ENCODE measurements at regions of chr6 and their contacts with region 1.

Region 1: GRCh38 chr6:167833396-167833763 is 6.7 kb downstream of the AFDN start:
- DNase-seq: no peak
- ATAC-seq: peak; percentile 23
- H3K4me3 ChIP-seq: peak overlapping the region; percentile 57
- H3K27ac ChIP-seq: peak overlapping the region; percentile 84
- H3K4me1 ChIP-seq: peaks cover 20% of the 10 kb centered on the region
- H3K27me3 ChIP-seq: no peaks in the 10 kb centered on the region
- CTCF ChIP-seq: no peak
- EP300 ChIP-seq: no peak
- POLR2A ChIP-seq: no peak
- RAD21 ChIP-seq: no peak

Region 2: DNA sequence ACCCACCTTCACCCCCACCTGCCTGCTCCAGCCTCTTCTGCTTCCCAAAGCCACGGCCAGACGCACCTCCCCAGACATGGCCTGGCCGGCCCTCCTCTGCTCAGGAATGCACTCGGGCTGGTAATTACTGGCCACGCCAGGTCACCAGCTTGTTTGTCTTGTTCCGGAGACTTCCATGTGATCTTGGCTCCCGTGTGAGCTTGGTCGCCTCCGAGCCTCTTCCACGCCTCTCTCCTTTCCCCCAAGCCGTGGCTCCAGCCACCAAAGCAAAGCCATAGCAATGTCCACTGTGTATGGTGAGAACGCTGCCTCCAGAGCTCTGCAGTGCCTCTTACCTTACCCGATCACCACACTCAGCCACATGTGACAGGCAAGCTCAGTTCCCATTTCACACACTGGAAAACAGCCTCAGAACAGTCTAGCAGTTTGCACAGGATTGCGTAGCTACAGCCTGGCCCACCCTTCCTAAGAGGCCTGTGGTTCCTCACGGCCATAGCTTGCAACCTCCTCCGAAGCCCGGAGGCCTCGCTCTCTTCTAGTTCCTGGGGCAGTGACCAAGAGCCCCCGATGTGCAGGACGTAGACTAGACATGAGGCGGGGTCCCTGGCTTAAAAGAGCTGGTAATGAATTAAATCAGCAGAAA is 54.8 kb before region 1 on chr6:
- CTCF ChIA-PET with region 1: no interaction called
- POLR2A ChIA-PET with region 1: no interaction called
- RAD21 ChIA-PET with region 1: no interaction called
- SMC1A ChIA-PET with region 1: no interaction called
- in situ Hi-C with region 1: no loop called
- intact Hi-C with region 1: no loop called
- DNase-seq: no peak
- ATAC-seq: no peak
- H3K4me3 ChIP-seq: no peak overlapping the region
- H3K27ac ChIP-seq: no peak overlapping the region
- H3K4me1 ChIP-seq: no peaks in the 10 kb centered on the region
- H3K27me3 ChIP-seq: no peaks in the 10 kb centered on the region; a peak in 1 of 4 replicates
- CTCF ChIP-seq: no peak
- EP300 ChIP-seq: no peak
- POLR2A ChIP-seq: no peak
- RAD21 ChIP-seq: no peak

Region 3: DNA sequence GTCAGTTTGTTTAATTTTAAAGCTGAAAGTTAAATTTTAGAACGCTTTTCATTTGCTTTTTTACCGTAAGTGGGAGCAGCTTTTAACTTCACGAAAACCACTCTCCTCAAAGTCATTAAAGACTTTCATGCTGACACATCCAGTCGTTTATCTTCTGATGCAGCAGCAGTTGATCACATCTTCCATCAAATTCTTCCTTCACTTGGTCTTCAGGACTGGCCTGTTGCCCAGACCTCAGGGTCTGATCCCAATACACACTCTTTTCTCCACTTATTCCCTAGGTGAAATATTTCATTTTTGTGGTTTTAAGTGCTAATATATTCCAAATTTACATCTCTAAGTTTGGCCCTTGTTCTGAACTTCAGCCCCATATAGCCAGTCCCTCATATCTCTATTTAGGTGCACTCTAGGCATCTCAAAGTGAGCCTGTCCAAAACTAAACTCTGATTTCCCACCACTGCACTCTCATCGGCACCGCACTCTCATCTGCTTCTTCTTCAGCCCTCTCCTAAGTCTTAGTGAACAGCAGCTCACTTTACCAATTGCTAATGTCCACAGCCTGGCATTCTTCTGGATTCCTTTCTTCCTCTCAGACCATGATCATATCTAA is 13.7 kb after region 1 on chr6:
- CTCF ChIA-PET with region 1: interaction called, 9 read pairs
- POLR2A ChIA-PET with region 1: interaction called, 4 read pairs
- RAD21 ChIA-PET with region 1: interaction called, 10 read pairs
- SMC1A ChIA-PET with region 1: interaction called, 28 read pairs
- in situ Hi-C with region 1: no loop called
- intact Hi-C with region 1: no loop called
- DNase-seq: no peak
- ATAC-seq: no peak
- H3K4me3 ChIP-seq: no peak overlapping the region
- H3K27ac ChIP-seq: no peak overlapping the region
- H3K4me1 ChIP-seq: peaks cover 7% of the 10 kb centered on the region; the same call in 1 of the 2 replicates
- H3K27me3 ChIP-seq: no peaks in the 10 kb centered on the region
- CTCF ChIP-seq: no peak
- EP300 ChIP-seq: no peak
- POLR2A ChIP-seq: no peak
- RAD21 ChIP-seq: no peak

Region 4: GRCh38 chr6:167898673-167899311 is 65.4 kb after region 1 on chr6:
- CTCF ChIA-PET with region 1: interaction called, 10 read pairs
- POLR2A ChIA-PET with region 1: no interaction called
- RAD21 ChIA-PET with region 1: interaction called, 4 read pairs
- SMC1A ChIA-PET with region 1: interaction called, 8 read pairs
- in situ Hi-C with region 1: no loop called
- intact Hi-C with region 1: no loop called
- DNase-seq: no peak
- ATAC-seq: peak; percentile 74
- H3K4me3 ChIP-seq: no peak overlapping the region
- H3K27ac ChIP-seq: no peak overlapping the region
- H3K4me1 ChIP-seq: no peaks in the 10 kb centered on the region
- H3K27me3 ChIP-seq: no peaks in the 10 kb centered on the region
- CTCF ChIP-seq: peak; percentile 68 to 77 (median 71); a peak in 5 of 6 replicates
- EP300 ChIP-seq: no peak
- POLR2A ChIP-seq: no peak
- RAD21 ChIP-seq: peak; percentile 92

Measured in GM12878 (cell line).